ENCODE measurements at regions of chr10 and their contacts with region 1.

Region 1: GRCh38 chr10:109883859-109884771 is 39.2 kb downstream of the XPNPEP1 start:
- DNase-seq: peak; percentile 51
- H3K4me3 ChIP-seq: no peak overlapping the region
- H3K27ac ChIP-seq: peak overlapping the region in 3 of 4 donors; percentile 15 to 50 (median 38)
- H3K4me1 ChIP-seq: peaks cover 0 to 13% (median 7%) of the 10 kb centered on the region in 4 donors
- H3K27me3 ChIP-seq: no peaks in the 10 kb centered on the region
- CTCF ChIP-seq: peak; percentile 94 to 96 (median 94)
- EP300 ChIP-seq: no peak
- POLR2A ChIP-seq: no peak

Region 2: DNA sequence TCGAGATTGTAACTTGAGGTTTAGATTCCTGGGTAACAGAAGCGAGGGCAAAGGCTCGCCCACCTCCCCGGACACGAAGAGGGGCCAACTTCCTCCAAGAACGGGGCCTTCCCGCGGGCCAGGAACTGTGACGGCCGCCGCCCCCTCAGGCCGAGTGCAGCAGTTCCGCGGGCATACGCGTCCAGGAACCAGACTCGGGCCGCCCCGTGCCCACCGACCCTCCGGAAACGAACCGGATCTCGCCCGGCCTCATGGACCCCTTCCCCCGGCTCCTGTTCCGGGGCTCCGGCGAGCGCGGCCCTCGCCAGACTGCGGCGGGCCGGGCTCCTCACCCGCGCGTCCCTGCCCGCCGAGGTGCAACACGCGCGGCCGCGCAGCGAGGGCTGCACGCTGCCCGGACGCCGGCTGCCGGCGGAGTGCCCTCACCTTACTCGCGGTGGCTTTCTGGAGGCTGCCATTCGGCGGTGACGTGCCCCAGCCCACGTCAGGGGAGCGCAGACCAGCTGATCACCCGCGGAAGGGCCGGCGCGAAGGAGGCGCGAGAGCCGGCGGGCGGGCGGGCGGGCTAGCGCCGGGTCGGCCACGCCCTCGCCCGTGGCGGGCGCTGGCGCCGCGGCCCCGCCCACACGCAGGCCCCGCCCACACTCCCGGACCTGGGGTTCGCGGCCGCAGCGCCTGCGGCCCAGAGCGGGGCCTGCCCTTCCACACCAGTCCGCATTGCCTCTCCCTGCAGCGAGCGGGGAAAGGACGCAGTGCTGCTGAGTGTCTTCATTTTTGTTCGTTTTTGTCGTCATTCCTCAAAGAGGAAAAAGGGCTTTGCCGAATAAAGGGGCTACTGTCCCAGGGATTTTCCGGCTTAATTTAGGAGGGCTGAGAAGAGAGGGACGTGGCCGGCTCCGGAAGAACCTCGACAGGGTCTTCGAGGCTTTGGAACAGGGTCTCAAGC is 39.1 kb after region 1 on chr10 and contains the start of gene XPNPEP1:
- in situ Hi-C with region 1: no loop called
- intact Hi-C with region 1: no loop called
- DNase-seq: peak; percentile 91
- H3K4me3 ChIP-seq: peak within 1 kb of the TSS; percentile 72 to 96 (median 93)
- H3K27ac ChIP-seq: peak within 1 kb of the TSS; percentile 91 to 98 (median 96)
- H3K4me1 ChIP-seq: peaks cover 0 to 34% (median 20%) of the 10 kb centered on the region in 4 donors
- H3K27me3 ChIP-seq: no peaks in the 10 kb centered on the region
- CTCF ChIP-seq: no peak
- EP300 ChIP-seq: no peak
- POLR2A ChIP-seq: peak; percentile 67
- total RNA-seq, gene XPNPEP1: 108 to 298 (median 127) TPM

Region 3: DNA sequence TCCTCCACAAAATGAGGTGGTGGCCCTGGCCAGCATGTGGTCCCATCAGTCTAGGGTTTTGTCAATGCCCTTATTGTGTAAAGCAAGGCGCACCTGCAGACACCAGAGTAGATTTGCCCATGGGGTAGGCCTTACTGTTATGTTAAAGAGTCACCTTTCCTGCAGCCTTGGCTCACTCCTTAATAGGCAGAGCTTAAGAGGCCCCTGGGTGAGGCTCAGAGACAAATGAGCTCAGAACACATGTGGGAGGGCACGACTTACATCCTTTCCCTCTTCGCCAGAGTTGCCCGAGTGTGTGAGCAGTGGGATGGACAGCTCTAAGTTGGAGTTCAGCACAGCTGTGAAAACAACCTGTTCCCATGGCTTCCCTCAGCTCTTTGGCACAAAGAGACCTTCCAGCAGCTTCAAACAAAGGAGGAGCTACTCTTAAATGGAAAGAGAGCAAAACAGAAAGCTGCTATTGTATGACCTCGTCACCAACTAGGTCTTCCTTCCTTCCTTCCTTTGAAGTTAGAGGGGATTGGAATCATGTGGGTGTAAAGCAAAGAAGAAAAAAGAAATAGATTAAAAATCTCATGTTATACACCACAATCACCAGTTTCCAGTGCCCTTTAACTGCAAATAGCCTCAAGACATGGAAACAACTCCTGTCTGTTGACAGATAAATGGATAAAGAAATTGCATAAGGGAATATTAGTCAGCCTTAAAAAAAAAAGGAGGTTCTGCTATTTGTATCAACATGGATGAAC is 51.0 kb after region 1 on chr10:
- in situ Hi-C with region 1: no loop called
- intact Hi-C with region 1: no loop called
- DNase-seq: no peak
- H3K4me3 ChIP-seq: no peak overlapping the region
- H3K27ac ChIP-seq: peak overlapping the region in 1 of 4 donors; percentile 19
- H3K4me1 ChIP-seq: no peaks in the 10 kb centered on the region
- H3K27me3 ChIP-seq: no peaks in the 10 kb centered on the region
- CTCF ChIP-seq: no peak
- EP300 ChIP-seq: no peak
- POLR2A ChIP-seq: no peak

Region 4: GRCh38 chr10:110016039-110016438 is 131.9 kb after region 1 on chr10:
- in situ Hi-C with region 1: no loop called
- intact Hi-C with region 1: loop called (anchors 10 kb)
- DNase-seq: no peak
- H3K4me3 ChIP-seq: no peak overlapping the region
- H3K27ac ChIP-seq: peak overlapping the region in 1 of 4 donors; percentile 15
- H3K4me1 ChIP-seq: peaks cover 0 to 57% (median 18%) of the 10 kb centered on the region in 4 donors
- H3K27me3 ChIP-seq: no peaks in the 10 kb centered on the region
- CTCF ChIP-seq: peak in 4 of 5 experiments; percentile 20 to 33 (median 25)
- EP300 ChIP-seq: no peak
- POLR2A ChIP-seq: no peak

Region 5: GRCh38 chr10:110110338-110110737 is 226.2 kb after region 1 on chr10:
- in situ Hi-C with region 1: loop called in 2 of 4 experiments (anchors 10 to 25 kb)
- intact Hi-C with region 1: no loop called
- DNase-seq: no peak
- H3K4me3 ChIP-seq: no peak overlapping the region
- H3K27ac ChIP-seq: no peak overlapping the region
- H3K4me1 ChIP-seq: no peaks in the 10 kb centered on the region
- H3K27me3 ChIP-seq: no peaks in the 10 kb centered on the region
- CTCF ChIP-seq: no peak
- EP300 ChIP-seq: no peak
- POLR2A ChIP-seq: no peak

Region 6: GRCh38 chr10:110285501-110285900 is 401.4 kb after region 1 on chr10:
- in situ Hi-C with region 1: loop called in 2 of 4 experiments (anchors 10 to 25 kb)
- intact Hi-C with region 1: loop called (anchors 10 kb)
- DNase-seq: no peak
- H3K4me3 ChIP-seq: no peak overlapping the region
- H3K27ac ChIP-seq: no peak overlapping the region
- H3K4me1 ChIP-seq: no peaks in the 10 kb centered on the region
- H3K27me3 ChIP-seq: no peaks in the 10 kb centered on the region
- CTCF ChIP-seq: no peak
- EP300 ChIP-seq: no peak
- POLR2A ChIP-seq: no peak

Measured in transverse colon (tissue), 4 donors.